CD4-positive, alpha-beta T cell (primary cell): ENCODE measurements at regions of chr2 and their contacts with region 1.

Region 1: GRCh38 chr2:181305301-181306123 is 151.7 kb upstream of the ITGA4 start:
- DNase-seq: peak in 13 of 14 experiments; percentile 9 to 81 (median 37)
- ATAC-seq: peak; percentile 77
- H3K4me3 ChIP-seq: no peak overlapping the region
- H3K4me3 Mint-ChIP-seq: peak overlapping the region; percentile 79
- H3K27ac ChIP-seq: peak overlapping the region; percentile 78 to 84
- H3K27ac Mint-ChIP-seq: peak overlapping the region; percentile 95
- H3K4me1 ChIP-seq: peaks cover 34% of the 10 kb centered on the region
- H3K4me1 Mint-ChIP-seq: peaks cover 85% of the 10 kb centered on the region
- H3K27me3 ChIP-seq: no peaks in the 10 kb centered on the region
- H3K27me3 Mint-ChIP-seq: no peaks in the 10 kb centered on the region
- CTCF ChIP-seq: no peak

Region 2: GRCh38 chr2:181123798-181124231 is 181.7 kb before region 1 on chr2:
- CTCF ChIA-PET with region 1: interaction called, 3 read pairs
- POLR2A ChIA-PET with region 1: interaction called, 7 read pairs
- intact Hi-C with region 1: loop called in 1 of 2 experiments (anchors 5 kb)
- DNase-seq: peak in 13 of 14 experiments; percentile 29 to 94 (median 44)
- ATAC-seq: peak; percentile 95
- H3K4me3 ChIP-seq: peak overlapping the region; percentile 35
- H3K4me3 Mint-ChIP-seq: peak overlapping the region; percentile 65
- H3K27ac ChIP-seq: peak overlapping the region; percentile 87 to 90
- H3K27ac Mint-ChIP-seq: peak overlapping the region; percentile 99
- H3K4me1 ChIP-seq: peaks cover 17% of the 10 kb centered on the region
- H3K4me1 Mint-ChIP-seq: peaks cover 74% of the 10 kb centered on the region
- H3K27me3 ChIP-seq: no peaks in the 10 kb centered on the region
- H3K27me3 Mint-ChIP-seq: no peaks in the 10 kb centered on the region
- CTCF ChIP-seq: no peak

Region 3: DNA sequence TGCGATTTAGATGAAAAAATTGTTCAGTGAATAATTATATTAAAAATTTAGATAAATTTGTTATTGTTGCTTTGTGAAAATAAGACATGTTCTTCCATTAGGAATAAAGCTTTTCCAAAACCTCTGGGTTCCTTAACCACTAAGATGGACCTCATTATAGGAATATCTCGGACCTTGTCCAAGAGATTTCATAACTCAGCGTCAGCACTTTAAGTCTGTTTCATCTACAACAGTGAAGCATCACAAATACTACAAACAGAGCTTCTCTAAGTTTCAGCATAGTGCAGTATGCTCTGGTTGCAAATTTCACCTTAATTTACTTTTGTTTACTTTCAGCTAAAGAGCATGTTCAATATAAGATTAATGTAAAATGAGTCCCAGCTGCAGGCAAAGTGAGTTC is 174.8 kb before region 1 on chr2:
- CTCF ChIA-PET with region 1: interaction called, 3 read pairs
- POLR2A ChIA-PET with region 1: interaction called, 4 read pairs
- intact Hi-C with region 1: loop called in 1 of 2 experiments (anchors 5 kb)
- DNase-seq: no peak
- ATAC-seq: no peak
- H3K4me3 ChIP-seq: no peak overlapping the region
- H3K4me3 Mint-ChIP-seq: peak overlapping the region; percentile 70
- H3K27ac ChIP-seq: peak overlapping the region in 1 of 2 donors; percentile 58
- H3K27ac Mint-ChIP-seq: peak overlapping the region; percentile 79
- H3K4me1 ChIP-seq: peaks cover 16% of the 10 kb centered on the region
- H3K4me1 Mint-ChIP-seq: peaks cover 66% of the 10 kb centered on the region
- H3K27me3 ChIP-seq: no peaks in the 10 kb centered on the region
- H3K27me3 Mint-ChIP-seq: no peaks in the 10 kb centered on the region
- CTCF ChIP-seq: no peak

Region 4: GRCh38 chr2:181223234-181223633 is 82.3 kb before region 1 on chr2:
- CTCF ChIA-PET with region 1: no interaction called
- POLR2A ChIA-PET with region 1: interaction called, 3 read pairs
- intact Hi-C with region 1: loop called in 1 of 2 experiments (anchors 10 kb)
- DNase-seq: peak in 3 of 14 experiments; percentile 20 to 74 (median 26)
- ATAC-seq: peak; percentile 68
- H3K4me3 ChIP-seq: no peak overlapping the region
- H3K4me3 Mint-ChIP-seq: peak overlapping the region; percentile 49
- H3K27ac ChIP-seq: peak overlapping the region; percentile 36 to 50
- H3K27ac Mint-ChIP-seq: peak overlapping the region; percentile 96
- H3K4me1 ChIP-seq: no peaks in the 10 kb centered on the region
- H3K4me1 Mint-ChIP-seq: peaks cover 51% of the 10 kb centered on the region
- H3K27me3 ChIP-seq: no peaks in the 10 kb centered on the region
- H3K27me3 Mint-ChIP-seq: no peaks in the 10 kb centered on the region
- CTCF ChIP-seq: no peak

Region 5: DNA sequence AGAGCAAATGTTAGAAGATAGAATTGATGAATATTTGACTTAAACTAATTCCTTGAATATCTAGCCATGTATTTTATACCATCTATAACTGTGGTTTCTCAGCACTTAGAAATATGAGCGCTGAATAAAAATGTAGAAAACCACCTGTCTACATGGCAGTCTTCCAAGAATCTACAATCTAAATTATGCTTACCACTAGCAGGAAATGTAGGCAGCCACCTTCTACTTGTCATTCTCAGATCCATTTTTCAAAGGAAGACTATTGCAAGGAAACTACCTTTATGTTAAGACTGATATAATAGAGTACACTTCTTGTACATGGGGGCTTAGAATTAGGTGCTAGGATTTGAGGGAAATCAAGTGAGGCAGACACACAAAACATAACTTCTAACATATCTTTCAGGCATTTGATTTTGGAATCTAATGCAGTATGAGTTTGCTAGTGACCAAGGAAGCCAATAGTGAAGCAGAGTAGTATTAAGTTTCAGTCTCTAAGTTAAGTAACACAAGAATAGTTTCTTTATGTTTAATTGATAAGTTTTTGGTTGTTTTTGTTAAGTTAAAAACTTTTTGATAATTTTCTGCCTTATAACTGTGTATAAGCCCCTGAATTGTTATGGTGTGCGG is 24.2 kb before region 1 on chr2:
- CTCF ChIA-PET with region 1: no interaction called
- POLR2A ChIA-PET with region 1: interaction called, 4 read pairs
- intact Hi-C with region 1: loop called in 1 of 2 experiments (anchors 1 kb)
- DNase-seq: peak in 3 of 14 experiments; percentile 72 to 79 (median 77)
- ATAC-seq: peak; percentile 91
- H3K4me3 ChIP-seq: no peak overlapping the region
- H3K4me3 Mint-ChIP-seq: peak overlapping the region; percentile 31
- H3K27ac ChIP-seq: peak overlapping the region; percentile 43 to 63
- H3K27ac Mint-ChIP-seq: peak overlapping the region; percentile 78
- H3K4me1 ChIP-seq: peaks cover 5% of the 10 kb centered on the region
- H3K4me1 Mint-ChIP-seq: peaks cover 52% of the 10 kb centered on the region
- H3K27me3 ChIP-seq: no peaks in the 10 kb centered on the region
- H3K27me3 Mint-ChIP-seq: no peaks in the 10 kb centered on the region
- CTCF ChIP-seq: no peak

Region 6: DNA sequence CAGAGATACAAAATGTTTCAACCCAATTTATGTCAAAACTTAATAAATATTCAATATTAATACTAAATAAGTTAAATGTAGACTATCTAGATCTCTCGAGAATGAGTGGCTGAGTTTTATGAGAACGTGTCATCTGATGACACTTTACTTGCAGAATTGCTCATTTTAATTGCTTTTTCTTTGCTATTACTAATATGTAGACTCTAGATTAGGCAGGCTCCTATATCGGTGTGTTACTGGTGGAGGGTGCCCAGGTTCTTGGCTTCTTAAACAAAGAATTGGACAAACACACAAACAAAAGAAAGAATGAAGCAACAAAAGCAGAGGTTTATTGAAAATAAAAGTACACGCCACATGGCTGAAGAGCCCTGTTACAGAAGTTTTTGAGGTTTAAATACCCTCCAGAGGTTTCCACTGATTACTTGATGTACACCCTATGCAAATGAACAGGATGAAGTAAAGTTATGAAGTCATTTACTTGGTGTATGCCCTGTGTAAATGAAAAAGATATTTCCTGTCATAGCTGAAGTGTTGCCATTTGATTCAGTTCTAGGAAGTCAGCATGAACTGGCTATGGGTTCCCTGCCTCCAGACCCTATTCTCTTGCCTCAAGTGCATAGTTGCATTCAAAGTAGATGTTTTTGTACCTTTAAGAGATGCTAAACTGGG is 28.8 kb after region 1 on chr2:
- CTCF ChIA-PET with region 1: no interaction called
- POLR2A ChIA-PET with region 1: no interaction called
- intact Hi-C with region 1: no loop called
- DNase-seq: peak in 1 of 14 experiments; percentile 28
- ATAC-seq: no peak
- H3K4me3 ChIP-seq: no peak overlapping the region
- H3K4me3 Mint-ChIP-seq: no peak overlapping the region
- H3K27ac ChIP-seq: no peak overlapping the region
- H3K27ac Mint-ChIP-seq: no peak overlapping the region
- H3K4me1 ChIP-seq: no peaks in the 10 kb centered on the region
- H3K4me1 Mint-ChIP-seq: peaks cover 6% of the 10 kb centered on the region
- H3K27me3 ChIP-seq: no peaks in the 10 kb centered on the region
- H3K27me3 Mint-ChIP-seq: no peaks in the 10 kb centered on the region
- CTCF ChIP-seq: no peak

Region 7: DNA sequence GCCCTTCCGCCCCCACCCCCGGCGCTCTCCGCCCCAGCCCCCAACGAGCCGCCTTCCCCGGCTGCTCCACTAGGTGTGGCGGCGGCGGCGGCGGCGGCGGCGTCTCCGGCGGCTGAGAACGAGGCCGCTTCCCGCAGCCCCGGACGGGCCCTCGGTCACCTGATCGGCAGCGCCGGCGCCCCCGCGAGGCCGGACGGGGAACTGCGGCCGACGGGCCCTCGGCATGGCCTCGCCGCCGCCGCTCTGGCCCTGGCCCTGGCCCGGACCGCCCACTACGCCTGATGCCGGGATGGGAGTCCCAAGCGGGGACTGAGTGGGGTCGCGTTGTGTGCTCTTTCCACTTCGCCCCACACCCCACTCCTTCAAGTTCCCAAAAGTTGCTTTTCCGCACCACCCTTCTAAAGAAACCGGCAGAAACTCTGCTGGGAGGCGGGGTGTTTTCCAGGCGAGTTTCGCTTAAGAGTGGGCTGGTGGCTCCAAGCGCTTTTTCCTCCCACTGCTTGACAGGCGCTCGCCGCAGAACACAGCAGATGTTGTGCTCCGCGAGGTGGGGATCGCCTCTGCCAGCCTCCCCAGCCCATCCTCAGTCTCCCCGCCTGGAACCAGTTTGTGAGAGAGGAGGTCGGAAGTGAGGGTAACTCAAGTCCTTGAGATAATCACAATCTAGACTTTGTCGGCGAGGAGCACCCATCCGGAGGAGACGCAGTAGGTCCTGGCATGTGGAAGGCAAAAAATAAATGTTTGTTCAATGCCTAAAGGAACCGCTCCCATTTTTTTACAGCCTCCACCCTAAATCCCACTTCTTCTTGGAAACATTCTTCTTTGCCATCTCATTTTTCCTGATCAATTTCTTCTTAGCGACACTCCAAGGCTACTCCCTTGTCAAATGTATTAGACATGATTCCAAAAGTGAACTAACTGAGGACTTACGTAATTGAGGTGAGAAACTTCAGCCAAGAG is 1733.1 kb after region 1 on chr2 and contains the start of gene NCKAP1:
- CTCF ChIA-PET with region 1: no interaction called
- POLR2A ChIA-PET with region 1: no interaction called
- intact Hi-C with region 1: loop called in 1 of 2 experiments (anchors 5 kb)
- DNase-seq: peak; percentile 63 to 91 (median 81)
- ATAC-seq: peak; percentile 85
- H3K4me3 ChIP-seq: peak within 1 kb of the TSS; percentile 65
- H3K4me3 Mint-ChIP-seq: peak within 1 kb of the TSS; percentile 91
- H3K27ac ChIP-seq: no peak within 1 kb of the TSS
- H3K27ac Mint-ChIP-seq: peak within 1 kb of the TSS; percentile 40
- H3K4me1 ChIP-seq: peaks cover 15% of the 10 kb centered on the region
- H3K4me1 Mint-ChIP-seq: peaks cover 39% of the 10 kb centered on the region
- H3K27me3 ChIP-seq: peaks cover 3 to 55% of the 10 kb centered on the region in 2 experiments
- H3K27me3 Mint-ChIP-seq: peaks cover 32% of the 10 kb centered on the region
- CTCF ChIP-seq: peak; percentile 64
- total RNA-seq, gene NCKAP1: 2.4 to 2.5 TPM